Heart right ventricle (tissue), 16 donors: ENCODE measurements at regions of chr17 and their contacts with region 1.

Region 1: DNA sequence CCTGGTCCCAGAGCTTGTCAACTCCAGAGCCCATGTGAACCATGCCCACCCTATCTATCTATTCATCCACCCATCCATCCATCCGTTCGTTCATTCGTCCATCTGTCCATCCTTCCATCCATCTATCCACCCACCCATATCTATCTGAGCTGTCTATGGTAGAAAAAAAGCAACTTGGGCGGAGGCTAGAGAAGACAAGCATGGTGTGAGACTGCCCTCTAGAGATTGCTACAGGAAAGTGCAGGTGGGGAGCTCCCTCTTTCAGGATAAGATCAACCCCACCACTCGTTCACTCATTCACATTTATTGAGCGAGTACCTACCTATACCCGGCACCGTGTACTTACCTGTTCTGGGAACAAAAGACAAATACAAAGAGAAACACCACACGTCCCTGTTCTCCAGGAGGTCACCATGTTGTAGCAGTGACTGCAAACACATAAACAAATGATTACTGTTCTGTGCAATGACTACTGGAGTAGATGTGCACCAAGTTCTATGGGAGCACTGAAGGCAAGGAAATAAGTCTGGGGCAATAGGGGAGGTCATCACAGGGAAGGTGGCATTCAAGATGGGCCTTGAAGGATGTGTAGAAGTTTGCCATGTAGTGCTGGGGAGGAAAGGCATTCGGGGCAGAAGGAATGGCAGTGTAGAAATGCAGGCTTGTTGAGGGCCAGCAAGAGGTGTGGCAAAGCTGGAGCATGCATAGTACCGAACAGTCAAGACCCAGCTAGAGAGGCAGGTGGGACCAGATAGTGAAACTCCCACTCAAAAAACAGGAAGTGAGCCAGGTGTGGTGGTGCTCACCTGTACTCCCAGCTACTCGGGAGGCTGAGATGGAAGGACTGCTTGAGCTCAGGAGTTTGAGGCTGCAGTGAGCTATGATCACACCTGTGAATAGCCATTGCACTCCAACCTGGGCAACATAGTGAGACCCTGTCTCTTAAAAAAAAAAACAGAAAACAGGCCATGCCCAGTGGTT is 13.4 kb upstream of the ATP5MC1 start:
- DNase-seq: peak in 1 of 2 donors; percentile 55
- ATAC-seq: peak; percentile 76 to 88 (median 86)
- H3K4me3 ChIP-seq: no peak overlapping the region
- H3K27ac ChIP-seq: no peak overlapping the region
- H3K4me1 ChIP-seq: peaks cover 0 to 14% (median 0%) of the 10 kb centered on the region in 9 donors
- H3K27me3 ChIP-seq: peaks cover 0 to 4% (median 0%) of the 10 kb centered on the region in 7 donors
- CTCF ChIP-seq: peak; percentile 90 to 96 (median 95)

Region 2: DNA sequence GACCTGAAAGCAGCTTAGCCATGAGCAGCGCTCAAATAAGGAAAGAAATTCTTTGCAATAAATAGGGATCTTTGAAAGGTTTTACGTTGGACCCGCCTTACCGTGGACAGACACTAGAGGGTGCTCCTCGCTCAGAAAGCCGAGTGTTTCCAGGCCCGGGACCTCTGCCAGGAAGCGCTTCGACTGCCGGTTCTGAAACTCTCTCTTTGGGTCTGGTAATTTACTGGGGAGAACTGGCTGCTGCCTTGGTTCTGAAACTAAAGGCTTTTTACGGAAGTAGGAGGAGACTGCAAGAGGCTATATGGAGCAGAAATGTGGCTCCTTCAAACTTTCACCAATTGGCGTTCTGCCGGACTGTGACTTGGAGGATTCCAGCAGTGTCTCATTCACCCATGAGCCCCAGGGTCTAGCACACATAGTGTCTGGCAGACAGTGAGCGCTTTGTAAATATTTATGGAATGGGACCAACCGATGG is 207.5 kb before region 1 on chr17:
- intact Hi-C with region 1: loop called in 9 of 10 experiments (anchors 2 to 10 kb)
- DNase-seq: peak; percentile 79 to 80
- ATAC-seq: peak in 7 of 8 donors; percentile 61 to 79 (median 72)
- H3K4me3 ChIP-seq: peak overlapping the region in 7 of 10 donors; percentile 33 to 46 (median 40)
- H3K27ac ChIP-seq: no peak overlapping the region
- H3K4me1 ChIP-seq: peaks cover 0 to 13% (median 5%) of the 10 kb centered on the region in 9 donors
- H3K27me3 ChIP-seq: peaks cover 0 to 92% (median 78%) of the 10 kb centered on the region in 7 donors
- CTCF ChIP-seq: peak; percentile 82 to 95 (median 89)

Region 3: GRCh38 chr17:48724251-48725003 is 154.8 kb before region 1 on chr17:
- intact Hi-C with region 1: loop called in 9 of 10 experiments (anchors 2 to 10 kb)
- DNase-seq: peak; percentile 85 to 87
- ATAC-seq: peak; percentile 74 to 93 (median 88)
- H3K4me3 ChIP-seq: peak overlapping the region in 2 of 10 donors; percentile 12 to 22
- H3K27ac ChIP-seq: no peak overlapping the region
- H3K4me1 ChIP-seq: peaks cover 0 to 45% (median 31%) of the 10 kb centered on the region in 9 donors
- H3K27me3 ChIP-seq: peaks cover 63 to 100% (median 100%) of the 10 kb centered on the region in 7 donors
- CTCF ChIP-seq: peak; percentile 53 to 83 (median 73)

Region 4: DNA sequence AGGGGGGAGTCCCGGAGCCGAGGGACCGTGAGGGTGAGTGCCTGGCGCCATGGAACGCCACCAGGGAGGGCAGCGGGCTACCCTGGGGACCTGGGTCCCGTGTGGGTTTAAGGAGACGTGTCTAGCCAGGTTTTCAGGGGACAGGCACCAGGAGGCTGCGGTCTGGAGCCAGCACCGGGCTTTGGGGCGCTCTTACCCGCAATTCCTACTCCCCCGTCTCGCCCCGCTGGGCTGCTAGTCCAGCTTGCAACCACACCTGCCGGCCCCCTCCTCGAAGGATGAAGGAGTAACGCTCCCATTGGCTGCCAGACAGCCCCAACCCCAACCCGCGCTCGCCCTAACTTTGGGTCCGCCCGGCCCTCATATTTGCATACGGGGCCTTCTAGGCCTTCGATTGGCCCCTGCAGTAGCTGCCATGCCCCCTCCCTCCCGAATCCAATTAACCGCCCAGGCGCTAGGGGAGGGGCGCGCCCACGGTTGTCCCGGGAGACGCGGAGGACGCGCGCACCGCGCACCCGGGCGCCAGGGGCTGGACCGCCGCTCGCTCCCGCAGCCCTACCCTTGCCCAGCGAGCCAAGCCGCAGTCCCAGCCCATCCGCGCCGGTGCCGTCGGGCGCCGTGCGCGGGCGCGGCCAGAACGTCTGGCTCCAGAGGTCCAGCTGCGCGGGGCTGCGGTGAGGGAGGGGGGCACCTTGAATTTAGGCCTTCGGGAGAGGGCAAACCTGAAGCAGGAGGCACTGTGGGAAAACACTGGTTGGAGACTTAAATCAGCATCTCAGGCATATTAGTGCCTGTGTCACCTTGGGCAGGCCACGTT is 62.2 kb before region 1 on chr17 and contains the start of gene TTLL6:
- intact Hi-C with region 1: loop called in 9 of 10 experiments (anchors 1 to 5 kb)
- DNase-seq: peak; percentile 84 to 85
- ATAC-seq: peak; percentile 98 to 100 (median 98)
- H3K4me3 ChIP-seq: peak within 1 kb of the TSS in 9 of 10 donors; percentile 37 to 58 (median 49)
- H3K27ac ChIP-seq: no peak within 1 kb of the TSS
- H3K4me1 ChIP-seq: peaks cover 0 to 17% (median 11%) of the 10 kb centered on the region in 9 donors
- H3K27me3 ChIP-seq: peaks cover 0 to 67% (median 6%) of the 10 kb centered on the region in 7 donors
- CTCF ChIP-seq: no peak
- total RNA-seq, gene TTLL6: 0.08 to 0.33 TPM in 2 of 10 donors, not detected in the others

Region 5: DNA sequence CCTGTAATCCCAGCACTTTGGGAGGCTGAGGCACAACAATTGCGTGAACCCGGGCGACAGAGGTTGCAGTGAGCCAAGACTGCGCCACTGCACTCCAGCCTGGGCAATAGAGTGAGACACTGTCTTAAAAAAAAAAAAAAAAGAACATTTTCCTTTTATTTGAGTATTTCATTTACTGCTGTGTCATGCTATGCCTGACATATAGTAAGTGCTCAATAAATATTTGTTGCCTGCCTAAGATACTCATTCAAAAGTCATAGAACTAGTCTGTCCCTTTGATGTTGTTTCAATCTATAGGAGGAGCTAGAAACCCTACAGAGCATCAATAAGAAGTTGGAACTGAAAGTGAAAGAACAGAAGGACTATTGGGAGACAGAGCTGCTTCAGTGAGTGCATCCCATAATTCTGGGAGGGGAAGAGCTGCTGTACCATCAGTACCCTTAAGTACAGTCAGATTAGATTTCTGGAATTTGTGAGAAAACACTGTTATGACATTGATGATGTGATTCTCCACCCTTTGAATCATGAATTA is 28.4 kb before region 1 on chr17:
- intact Hi-C with region 1: no loop called
- DNase-seq: no peak
- ATAC-seq: no peak
- H3K4me3 ChIP-seq: no peak overlapping the region
- H3K27ac ChIP-seq: peak overlapping the region in 1 of 10 donors; percentile 22
- H3K4me1 ChIP-seq: peaks cover 0 to 13% (median 9%) of the 10 kb centered on the region in 9 donors
- H3K27me3 ChIP-seq: no peaks in the 10 kb centered on the region
- CTCF ChIP-seq: no peak

Region 6: DNA sequence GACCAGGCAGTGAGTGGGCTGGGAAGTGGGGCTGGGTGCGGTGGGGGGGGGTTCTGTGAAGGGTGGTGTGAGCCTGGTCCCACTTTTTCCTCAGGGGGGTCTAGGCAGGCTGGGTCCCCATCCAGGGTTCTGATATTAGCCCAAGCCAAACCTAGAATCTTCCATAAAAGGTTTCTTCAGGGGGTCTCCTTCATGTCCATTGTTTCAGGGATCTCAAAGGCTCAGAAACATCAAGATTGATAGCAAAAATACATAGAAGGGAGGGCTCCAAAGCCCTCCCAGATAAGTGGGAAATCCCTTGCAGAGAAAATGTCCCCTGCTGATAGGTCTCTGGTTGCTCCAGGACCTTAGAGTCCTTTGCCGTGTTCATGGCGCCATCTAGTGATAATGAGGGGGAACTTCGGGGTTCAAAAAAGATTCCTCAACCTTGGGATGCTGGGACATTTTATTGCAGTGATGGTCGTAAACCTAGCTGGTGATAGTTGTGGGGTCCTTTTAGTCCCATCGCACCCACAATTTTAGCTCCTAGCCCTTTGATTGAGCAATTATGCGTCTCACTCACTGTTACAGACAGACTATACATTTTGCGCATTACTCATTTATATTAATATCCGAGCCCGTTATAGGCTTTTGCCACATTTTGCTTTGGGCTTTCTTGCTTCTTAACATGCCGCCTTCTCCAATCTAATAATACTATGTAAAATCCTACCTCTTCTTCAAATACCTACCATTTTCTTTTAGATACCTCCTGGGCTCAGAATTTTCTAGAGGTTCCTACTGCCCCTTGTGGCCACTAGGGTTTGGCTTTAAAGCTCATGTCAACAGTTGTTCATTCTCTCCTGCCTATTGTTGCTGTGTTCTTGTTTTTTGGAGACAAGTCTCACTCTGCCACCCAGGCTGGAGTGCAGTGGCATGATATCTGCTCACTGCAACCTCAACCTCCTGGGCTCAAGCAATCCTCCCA is 153.0 kb after region 1 on chr17:
- intact Hi-C with region 1: loop called in 5 of 10 experiments (anchors 5 to 10 kb)
- DNase-seq: peak in 1 of 2 donors; percentile 33
- ATAC-seq: peak in 7 of 8 donors; percentile 53 to 74 (median 67)
- H3K4me3 ChIP-seq: no peak overlapping the region
- H3K27ac ChIP-seq: no peak overlapping the region
- H3K4me1 ChIP-seq: peaks cover 0 to 10% (median 0%) of the 10 kb centered on the region in 9 donors
- H3K27me3 ChIP-seq: peaks cover 0 to 44% (median 29%) of the 10 kb centered on the region in 7 donors
- CTCF ChIP-seq: peak; percentile 58 to 82 (median 74)